ENCODE measurements at regions of chr11 and their contacts with region 1.

Region 1: GRCh38 chr11:3959015-3959919 is 103.8 kb downstream of the STIM1 start:
- DNase-seq: no peak
- H3K4me3 ChIP-seq: no peak overlapping the region
- H3K27ac ChIP-seq: no peak overlapping the region
- H3K4me1 ChIP-seq: no peaks in the 10 kb centered on the region
- H3K27me3 ChIP-seq: no peaks in the 10 kb centered on the region
- CTCF ChIP-seq: peak in 2 of 3 experiments; percentile 27 to 35; a peak in 2 of 4 replicates
- EP300 ChIP-seq: no peak
- POLR2A ChIP-seq: no peak
- RAD21 ChIP-seq: peak; percentile 32 to 42; a peak in 3 of 4 replicates

Region 2: DNA sequence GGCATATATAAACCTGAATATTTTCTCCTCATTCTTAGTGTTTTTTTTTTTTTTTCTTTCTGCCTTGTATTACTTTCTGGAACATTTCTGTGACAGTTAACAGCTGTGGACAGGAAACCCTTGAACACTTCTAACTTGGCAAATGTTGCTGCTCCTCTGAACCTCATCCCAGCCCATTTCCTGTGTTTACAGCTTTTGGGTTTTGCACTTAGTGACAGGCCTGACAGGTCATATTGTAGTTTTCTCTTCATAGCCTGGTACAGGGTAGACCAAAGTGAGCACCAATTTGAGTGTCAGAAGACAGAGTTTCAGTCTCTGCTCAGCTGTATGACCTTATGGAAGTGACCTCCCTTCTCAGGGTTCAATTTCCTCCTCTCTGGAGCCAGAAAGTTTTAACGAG is 12.2 kb before region 1 on chr11:
- CTCF ChIA-PET with region 1: interaction called, 16 read pairs
- POLR2A ChIA-PET with region 1: no interaction called
- DNase-seq: no peak
- H3K4me3 ChIP-seq: no peak overlapping the region
- H3K27ac ChIP-seq: no peak overlapping the region
- H3K4me1 ChIP-seq: peaks cover 0 to 3% (median 2%) of the 10 kb centered on the region in 4 experiments; a peak in 4 of 7 replicates
- H3K27me3 ChIP-seq: no peaks in the 10 kb centered on the region; a peak in 1 of 7 replicates
- CTCF ChIP-seq: no peak
- EP300 ChIP-seq: no peak
- POLR2A ChIP-seq: no peak
- RAD21 ChIP-seq: no peak

Region 3: GRCh38 chr11:4134844-4135243 is 175.6 kb after region 1 on chr11:
- CTCF ChIA-PET with region 1: no interaction called
- POLR2A ChIA-PET with region 1: no interaction called
- DNase-seq: no peak
- H3K4me3 ChIP-seq: no peak overlapping the region
- H3K27ac ChIP-seq: no peak overlapping the region
- H3K4me1 ChIP-seq: no peaks in the 10 kb centered on the region
- H3K27me3 ChIP-seq: no peaks in the 10 kb centered on the region
- CTCF ChIP-seq: no peak
- EP300 ChIP-seq: no peak
- POLR2A ChIP-seq: no peak
- RAD21 ChIP-seq: no peak